Endothelial cell of umbilical vein (primary cell): ENCODE measurements at regions of chr11 and their contacts with region 1.

Region 1: DNA sequence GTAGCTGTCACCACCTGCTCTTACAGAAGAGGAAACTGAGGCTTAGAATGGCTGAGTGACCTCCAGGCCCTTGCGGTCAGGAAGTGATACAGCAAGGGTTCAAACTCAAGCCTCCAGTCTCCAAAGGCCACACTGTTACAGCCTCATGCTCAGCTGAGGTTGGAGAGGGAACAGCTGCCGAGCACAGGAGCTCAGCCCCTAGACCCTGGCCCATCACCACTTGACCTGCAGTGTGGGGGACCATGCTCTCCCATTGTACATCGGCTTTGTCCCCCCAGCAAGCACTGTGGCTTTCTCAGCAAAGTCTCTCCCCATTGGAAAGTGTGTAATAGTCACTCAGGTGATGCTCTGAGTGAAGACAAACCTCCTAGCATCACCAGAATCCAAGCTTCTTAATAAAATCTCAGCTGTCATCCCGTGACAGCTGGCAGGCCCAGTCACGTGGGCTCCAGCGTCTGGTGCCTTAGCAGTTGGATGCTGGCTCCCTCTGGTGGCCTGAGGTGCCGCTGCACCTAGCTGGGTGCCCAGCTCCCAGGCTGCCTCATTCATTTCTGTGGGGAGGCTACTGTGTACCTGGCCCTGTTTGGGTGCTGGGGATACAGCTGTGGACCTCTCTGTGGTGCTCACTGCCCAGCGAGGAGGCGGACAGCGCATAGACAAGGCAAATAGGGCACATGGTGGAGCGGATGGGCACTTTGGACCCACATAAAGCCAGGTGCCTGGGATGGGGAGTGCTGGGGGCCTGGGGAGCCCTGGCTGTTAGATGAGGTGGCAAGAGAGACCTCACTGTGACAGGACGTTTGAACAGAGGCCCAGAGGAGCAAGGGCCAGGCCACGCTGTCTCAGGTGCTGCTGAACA is 19.1 kb upstream of the MYRF start:
- DNase-seq: peak; percentile 66
- H3K4me3 ChIP-seq: no peak overlapping the region
- H3K27ac ChIP-seq: no peak overlapping the region
- H3K4me1 ChIP-seq: no peaks in the 10 kb centered on the region
- H3K27me3 ChIP-seq: no peaks in the 10 kb centered on the region
- CTCF ChIP-seq: peak; percentile 98 to 99
- POLR2A ChIP-seq: no peak

Region 2: DNA sequence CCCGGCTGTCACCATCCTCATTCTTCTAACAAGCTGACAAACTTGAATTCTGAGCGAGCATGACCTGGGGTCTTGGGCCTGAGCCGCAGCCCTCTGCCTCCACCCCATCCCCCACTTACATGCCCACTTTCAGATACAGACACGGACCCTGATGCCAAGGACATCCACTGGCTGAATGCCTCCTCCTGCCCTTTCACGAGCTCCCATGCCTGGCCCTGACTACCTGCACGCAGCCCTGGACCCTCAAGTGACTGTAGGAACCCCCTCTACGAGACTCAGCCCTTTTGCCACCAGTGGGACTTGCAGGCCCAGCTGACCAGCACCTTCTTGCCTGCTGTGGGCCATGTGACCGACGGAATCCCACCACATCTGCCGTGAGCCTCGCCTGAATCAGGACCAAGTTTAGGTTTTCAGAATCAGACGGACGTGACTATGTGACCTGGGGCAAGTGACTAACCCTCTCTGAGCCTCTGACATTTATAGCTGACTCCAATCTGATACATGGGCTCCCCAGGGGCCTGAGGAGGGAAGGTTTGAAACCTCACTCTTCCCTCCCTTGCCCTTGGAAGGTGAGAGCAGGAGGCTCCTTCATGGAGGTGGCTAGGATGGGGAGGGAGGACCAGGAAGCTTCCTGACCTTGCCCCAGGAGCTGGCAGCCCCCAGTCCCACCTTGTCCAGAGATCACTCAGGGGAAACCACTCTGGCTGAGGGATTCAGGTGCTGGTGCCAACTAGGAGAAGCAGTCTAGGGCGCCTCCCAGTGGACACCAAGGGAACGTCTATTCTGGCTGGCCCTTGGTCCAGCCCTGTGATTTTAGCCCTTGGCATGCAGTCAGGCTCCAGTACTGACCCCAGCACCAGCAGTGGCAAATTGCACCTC is 105.5 kb before region 1 on chr11:
- CTCF ChIA-PET with region 1: interaction called, 15 read pairs
- POLR2A ChIA-PET with region 1: no interaction called
- dilution Hi-C with region 1: no loop called
- intact Hi-C with region 1: no loop called
- DNase-seq: peak; percentile 55
- H3K4me3 ChIP-seq: no peak overlapping the region
- H3K27ac ChIP-seq: no peak overlapping the region
- H3K4me1 ChIP-seq: no peaks in the 10 kb centered on the region
- H3K27me3 ChIP-seq: no peaks in the 10 kb centered on the region
- CTCF ChIP-seq: peak; percentile 82 to 92
- POLR2A ChIP-seq: no peak

Region 3: DNA sequence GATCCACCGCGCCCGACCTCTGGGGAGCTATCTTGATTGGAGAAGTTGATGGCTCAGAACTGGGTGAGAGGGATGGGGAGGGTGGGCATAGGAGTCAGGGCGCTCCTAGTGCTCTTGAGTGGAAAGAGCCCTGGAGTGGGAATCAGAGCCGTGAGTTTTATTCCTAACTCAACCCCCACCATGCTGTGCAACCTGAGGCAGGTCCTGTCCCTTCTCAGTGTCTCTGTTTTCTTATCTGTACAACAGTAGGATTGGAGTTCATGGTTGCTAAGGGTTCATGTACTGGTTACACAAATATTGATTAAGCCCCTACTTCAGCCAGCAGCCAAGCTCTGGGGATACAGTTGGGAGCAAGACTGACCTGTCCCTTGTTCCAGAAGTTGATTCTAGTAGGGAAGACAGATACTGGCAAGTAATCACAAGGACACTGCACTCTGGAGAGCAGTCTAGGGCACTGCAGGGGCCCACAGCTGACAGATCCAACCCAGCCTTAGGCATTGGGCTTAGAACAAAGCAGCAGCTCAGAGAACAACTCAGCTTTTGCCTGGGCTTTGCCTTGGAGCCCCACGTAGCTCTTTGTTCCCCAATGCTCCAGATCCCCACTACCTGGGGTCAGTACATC is 65.6 kb before region 1 on chr11:
- CTCF ChIA-PET with region 1: interaction called, 11 read pairs
- POLR2A ChIA-PET with region 1: no interaction called
- dilution Hi-C with region 1: no loop called
- intact Hi-C with region 1: no loop called
- DNase-seq: no peak
- H3K4me3 ChIP-seq: no peak overlapping the region
- H3K27ac ChIP-seq: no peak overlapping the region
- H3K4me1 ChIP-seq: no peaks in the 10 kb centered on the region
- H3K27me3 ChIP-seq: peaks cover 2 to 7% of the 10 kb centered on the region in 2 experiments
- CTCF ChIP-seq: no peak
- POLR2A ChIP-seq: no peak

Region 4: GRCh38 chr11:61695917-61696316 is 37.4 kb before region 1 on chr11:
- CTCF ChIA-PET with region 1: interaction called, 17 read pairs
- POLR2A ChIA-PET with region 1: no interaction called
- dilution Hi-C with region 1: no loop called
- intact Hi-C with region 1: no loop called
- DNase-seq: peak; percentile 71
- H3K4me3 ChIP-seq: no peak overlapping the region
- H3K27ac ChIP-seq: peak overlapping the region; percentile 45
- H3K4me1 ChIP-seq: peaks cover 11% of the 10 kb centered on the region
- H3K27me3 ChIP-seq: no peaks in the 10 kb centered on the region
- CTCF ChIP-seq: peak in 1 of 2 donors; percentile 7
- POLR2A ChIP-seq: no peak

Region 5: DNA sequence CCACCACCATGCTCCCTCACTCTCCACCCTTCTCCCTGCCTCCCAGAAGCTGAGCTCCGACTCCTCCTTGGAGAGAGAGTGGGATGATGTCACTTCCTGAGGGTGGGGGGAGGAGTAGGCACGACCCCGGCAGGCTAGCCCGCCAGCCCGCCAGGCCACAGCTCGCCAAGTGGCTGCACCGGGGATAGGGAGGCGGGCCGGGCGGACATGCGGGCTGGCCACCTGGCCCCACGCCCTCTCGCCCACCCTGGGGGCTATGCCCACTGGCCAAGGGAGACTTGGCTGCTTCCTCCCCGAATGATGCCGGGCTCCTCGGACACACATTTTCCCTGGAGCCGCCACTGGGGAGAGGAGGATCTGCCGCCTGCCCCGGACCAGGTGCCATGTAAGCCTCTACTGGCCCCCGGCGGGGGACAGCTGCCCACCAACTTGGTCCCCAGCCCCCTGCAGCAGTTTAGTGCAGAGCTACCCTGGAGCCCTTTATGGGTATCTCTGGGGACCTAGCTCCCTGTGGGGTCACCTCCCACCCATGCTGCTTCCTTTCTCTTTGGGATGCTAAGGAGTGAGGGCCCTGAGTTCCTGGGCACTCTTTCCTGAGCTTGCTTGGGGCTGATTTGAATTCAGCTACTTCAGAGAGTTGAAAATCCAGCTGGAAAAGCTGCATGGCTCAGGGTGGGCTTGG is 14.6 kb before region 1 on chr11:
- CTCF ChIA-PET with region 1: interaction called, 22 read pairs
- POLR2A ChIA-PET with region 1: interaction called, 3 read pairs
- dilution Hi-C with region 1: no loop called
- intact Hi-C with region 1: no loop called
- DNase-seq: peak; percentile 64
- H3K4me3 ChIP-seq: peak overlapping the region in 2 of 3 experiments; percentile 1 to 19
- H3K27ac ChIP-seq: peak overlapping the region; percentile 32
- H3K4me1 ChIP-seq: peaks cover 28% of the 10 kb centered on the region
- H3K27me3 ChIP-seq: no peaks in the 10 kb centered on the region
- CTCF ChIP-seq: no peak
- POLR2A ChIP-seq: peak; percentile 16